HCT116 (cell line): ENCODE measurements at regions of chr9 and their contacts with region 1.

Region 1: GRCh38 chr9:94603259-94604160 is 9.9 kb upstream of the FBP2 start:
- DNase-seq: peak; percentile 62
- ATAC-seq: peak; percentile 99
- H3K4me3 ChIP-seq: no peak overlapping the region; a peak in 1 of 4 replicates
- H3K27ac ChIP-seq: no peak overlapping the region
- H3K4me1 ChIP-seq: peaks cover 0 to 11% of the 10 kb centered on the region in 2 experiments; a peak in 2 of 4 replicates
- H3K27me3 ChIP-seq: no peaks in the 10 kb centered on the region
- CTCF ChIP-seq: peak; percentile 70 to 72 (median 70)
- POLR2A ChIP-seq: no peak
- RAD21 ChIP-seq: peak; percentile 82

Region 2: DNA sequence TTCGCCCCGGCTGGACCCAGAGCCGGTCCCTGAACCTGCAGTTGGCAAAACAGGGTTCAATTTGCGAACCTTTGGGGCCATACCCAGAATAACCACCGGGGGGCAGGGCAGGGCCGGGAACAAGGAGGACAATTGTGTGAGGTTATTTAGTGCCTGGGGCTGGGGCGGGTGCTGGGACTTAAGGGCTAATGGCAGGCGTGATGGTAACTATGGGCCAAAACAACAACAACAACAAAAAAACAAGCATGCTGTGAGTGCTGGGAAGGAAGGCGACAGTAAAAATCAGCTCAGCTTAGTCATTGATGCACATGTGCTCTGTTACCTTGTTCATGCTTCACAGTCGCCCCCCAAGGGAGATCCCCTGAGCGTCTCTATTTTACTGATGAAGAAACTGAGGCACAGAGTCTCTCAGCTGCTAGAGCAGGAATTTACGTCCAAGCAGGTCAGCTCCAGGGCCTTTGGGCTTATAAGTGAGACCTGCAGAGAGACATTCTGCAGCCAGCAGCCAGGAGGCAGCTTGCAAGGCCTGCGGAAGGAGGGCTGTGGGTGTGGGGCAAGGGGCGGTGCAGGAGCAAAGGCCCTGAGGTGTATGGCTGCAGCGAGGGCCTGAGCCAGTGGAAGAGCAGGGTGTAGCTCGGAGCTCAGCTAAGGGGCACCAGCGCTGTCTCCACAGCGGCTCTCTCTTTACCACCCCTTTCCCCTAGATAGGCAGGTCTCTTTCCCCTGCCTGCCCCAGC is 921.1 kb before region 1 on chr9:
- CTCF ChIA-PET with region 1: no interaction called
- POLR2A ChIA-PET with region 1: no interaction called
- RAD21 ChIA-PET with region 1: no interaction called
- intact Hi-C with region 1: loop called (anchors 10 kb)
- DNase-seq: peak; percentile 34
- ATAC-seq: peak; percentile 86
- H3K4me3 ChIP-seq: no peak overlapping the region
- H3K27ac ChIP-seq: no peak overlapping the region
- H3K4me1 ChIP-seq: peaks cover 3 to 5% of the 10 kb centered on the region in 2 experiments; a peak in 1 of 4 replicates
- H3K27me3 ChIP-seq: no peaks in the 10 kb centered on the region
- CTCF ChIP-seq: peak; percentile 80 to 88 (median 88)
- POLR2A ChIP-seq: no peak
- RAD21 ChIP-seq: peak; percentile 92

Region 3: DNA sequence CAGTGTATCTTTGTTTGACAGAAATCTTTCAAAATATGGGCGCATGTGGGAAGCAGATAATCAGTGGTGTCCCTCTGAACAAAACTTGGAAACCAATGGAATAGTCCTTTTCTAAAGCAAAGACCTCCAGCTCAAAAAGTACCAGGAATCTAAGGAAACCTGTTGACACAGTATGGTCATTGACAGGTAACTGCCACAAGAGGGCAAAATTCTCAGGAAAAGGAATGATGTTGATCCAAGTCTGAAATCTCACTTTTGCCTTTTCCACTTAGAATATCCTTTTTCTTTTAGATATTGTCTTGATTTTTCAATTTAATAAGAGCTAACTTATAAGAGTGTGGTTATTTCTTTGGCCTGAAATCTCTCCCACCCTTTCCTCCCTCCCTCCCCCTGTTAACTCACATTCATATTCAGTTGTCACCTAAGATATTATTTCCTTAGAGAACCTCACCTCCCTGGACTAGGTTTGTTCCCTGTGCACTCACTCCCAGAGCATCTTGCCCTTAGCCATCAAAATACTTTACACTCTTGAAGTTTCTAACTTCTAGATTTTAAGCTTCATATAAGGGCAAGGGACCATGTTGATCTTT is 589.4 kb before region 1 on chr9:
- CTCF ChIA-PET with region 1: no interaction called
- POLR2A ChIA-PET with region 1: no interaction called
- RAD21 ChIA-PET with region 1: no interaction called
- intact Hi-C with region 1: loop called (anchors 10 kb)
- DNase-seq: no peak
- ATAC-seq: peak; percentile 79
- H3K4me3 ChIP-seq: no peak overlapping the region
- H3K27ac ChIP-seq: no peak overlapping the region
- H3K4me1 ChIP-seq: peaks cover 5 to 9% of the 10 kb centered on the region in 2 experiments; a peak in 3 of 4 replicates
- H3K27me3 ChIP-seq: no peaks in the 10 kb centered on the region
- CTCF ChIP-seq: peak; percentile 50 to 76 (median 69); a peak in 5 of 6 replicates
- POLR2A ChIP-seq: no peak
- RAD21 ChIP-seq: peak; percentile 62

Region 4: DNA sequence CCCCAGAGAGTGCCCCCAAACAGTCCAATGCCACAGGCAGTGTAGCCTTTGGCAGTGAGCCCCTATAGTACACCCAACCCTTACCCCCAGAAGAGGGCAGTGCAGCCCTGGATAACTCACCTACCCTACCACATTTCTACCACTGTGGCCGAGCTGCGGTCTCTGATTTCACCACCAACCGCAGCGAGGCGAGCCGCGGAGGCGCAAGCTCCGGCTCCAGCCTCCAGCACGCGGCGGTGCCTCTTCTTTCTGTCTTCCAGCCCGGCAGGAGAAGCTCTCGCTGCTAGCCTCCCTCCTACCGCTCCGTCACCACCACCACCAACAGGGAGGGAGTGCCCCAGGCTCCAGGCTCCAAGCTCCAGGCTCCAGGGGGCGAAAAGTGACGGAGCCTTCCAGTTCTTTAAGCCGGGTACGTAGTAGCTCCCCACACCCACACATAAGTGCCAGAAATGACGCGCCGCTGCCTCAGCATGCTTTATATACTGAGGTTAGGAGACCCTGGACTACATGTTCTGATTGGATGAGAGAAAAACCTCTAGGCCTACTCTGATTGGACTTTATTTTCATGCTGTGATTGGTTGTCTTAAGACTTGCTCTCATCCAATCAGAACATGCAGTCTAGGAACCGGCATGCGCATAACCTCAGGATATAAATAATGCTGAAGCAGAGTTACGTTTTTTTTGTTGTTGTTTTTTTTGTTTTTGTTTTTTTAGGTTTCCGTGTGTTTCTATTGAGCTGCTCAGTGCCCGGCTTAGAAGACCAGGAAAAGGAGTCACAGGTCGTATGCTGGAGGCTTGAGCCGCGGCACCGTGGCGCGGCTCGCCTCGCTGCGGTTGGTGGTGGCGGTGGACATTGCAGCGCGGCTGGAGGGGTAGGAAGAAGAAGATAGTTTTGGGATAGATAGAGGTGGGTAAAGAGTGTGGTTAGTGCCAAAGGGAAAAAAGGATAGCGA is 48.8 kb before region 1 on chr9 and contains the start of gene PCAT7:
- CTCF ChIA-PET with region 1: interaction called, 11 read pairs
- POLR2A ChIA-PET with region 1: no interaction called
- RAD21 ChIA-PET with region 1: interaction called in 1 of 2 experiments, 3 read pairs
- intact Hi-C with region 1: loop called (anchors 2 kb)
- DNase-seq: peak; percentile 74
- ATAC-seq: peak; percentile 95
- H3K4me3 ChIP-seq: peak within 1 kb of the TSS; percentile 69 to 80
- H3K27ac ChIP-seq: peak within 1 kb of the TSS; percentile 79
- H3K4me1 ChIP-seq: peaks cover 6 to 21% of the 10 kb centered on the region in 2 experiments; a peak in 2 of 4 replicates
- H3K27me3 ChIP-seq: no peaks in the 10 kb centered on the region
- CTCF ChIP-seq: peak; percentile 65 to 84 (median 77)
- POLR2A ChIP-seq: peak; percentile 92
- RAD21 ChIP-seq: peak; percentile 77
- total RNA-seq, gene PCAT7: 3.8 TPM

Region 5: GRCh38 chr9:94734054-94734754 is 130.7 kb after region 1 on chr9:
- CTCF ChIA-PET with region 1: no interaction called
- POLR2A ChIA-PET with region 1: no interaction called
- RAD21 ChIA-PET with region 1: no interaction called
- intact Hi-C with region 1: no loop called
- DNase-seq: no peak
- ATAC-seq: no peak
- H3K4me3 ChIP-seq: no peak overlapping the region
- H3K27ac ChIP-seq: no peak overlapping the region
- H3K4me1 ChIP-seq: no peaks in the 10 kb centered on the region
- H3K27me3 ChIP-seq: no peaks in the 10 kb centered on the region
- CTCF ChIP-seq: no peak
- POLR2A ChIP-seq: no peak
- RAD21 ChIP-seq: no peak

Region 6: DNA sequence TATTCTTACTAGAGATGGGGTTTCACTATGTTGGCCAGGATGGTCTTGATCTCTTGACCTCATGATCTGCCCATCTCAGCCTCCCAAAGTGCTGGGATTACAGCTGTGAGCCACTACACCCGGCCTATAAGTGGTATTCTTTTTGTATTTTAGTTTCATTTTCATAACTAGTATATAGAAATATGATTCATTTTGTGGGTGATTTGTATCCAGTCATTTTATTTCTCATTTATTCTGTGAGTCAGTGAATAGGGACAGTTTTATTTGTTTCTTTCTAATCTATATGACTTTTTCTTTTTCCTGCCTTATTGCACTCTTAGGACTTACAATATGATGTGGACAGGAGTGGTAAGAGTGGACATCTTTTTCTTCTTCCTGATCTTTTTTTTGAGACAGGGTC is 235.9 kb after region 1 on chr9:
- CTCF ChIA-PET with region 1: no interaction called
- POLR2A ChIA-PET with region 1: no interaction called
- RAD21 ChIA-PET with region 1: no interaction called
- intact Hi-C with region 1: no loop called
- DNase-seq: no peak
- ATAC-seq: no peak
- H3K4me3 ChIP-seq: no peak overlapping the region
- H3K27ac ChIP-seq: no peak overlapping the region
- H3K4me1 ChIP-seq: peaks cover 0 to 4% of the 10 kb centered on the region in 2 experiments; a peak in 1 of 4 replicates
- H3K27me3 ChIP-seq: no peaks in the 10 kb centered on the region
- CTCF ChIP-seq: no peak
- POLR2A ChIP-seq: no peak
- RAD21 ChIP-seq: no peak